ENCODE measurements at regions of chr1 and their contacts with region 1.

Region 1: DNA sequence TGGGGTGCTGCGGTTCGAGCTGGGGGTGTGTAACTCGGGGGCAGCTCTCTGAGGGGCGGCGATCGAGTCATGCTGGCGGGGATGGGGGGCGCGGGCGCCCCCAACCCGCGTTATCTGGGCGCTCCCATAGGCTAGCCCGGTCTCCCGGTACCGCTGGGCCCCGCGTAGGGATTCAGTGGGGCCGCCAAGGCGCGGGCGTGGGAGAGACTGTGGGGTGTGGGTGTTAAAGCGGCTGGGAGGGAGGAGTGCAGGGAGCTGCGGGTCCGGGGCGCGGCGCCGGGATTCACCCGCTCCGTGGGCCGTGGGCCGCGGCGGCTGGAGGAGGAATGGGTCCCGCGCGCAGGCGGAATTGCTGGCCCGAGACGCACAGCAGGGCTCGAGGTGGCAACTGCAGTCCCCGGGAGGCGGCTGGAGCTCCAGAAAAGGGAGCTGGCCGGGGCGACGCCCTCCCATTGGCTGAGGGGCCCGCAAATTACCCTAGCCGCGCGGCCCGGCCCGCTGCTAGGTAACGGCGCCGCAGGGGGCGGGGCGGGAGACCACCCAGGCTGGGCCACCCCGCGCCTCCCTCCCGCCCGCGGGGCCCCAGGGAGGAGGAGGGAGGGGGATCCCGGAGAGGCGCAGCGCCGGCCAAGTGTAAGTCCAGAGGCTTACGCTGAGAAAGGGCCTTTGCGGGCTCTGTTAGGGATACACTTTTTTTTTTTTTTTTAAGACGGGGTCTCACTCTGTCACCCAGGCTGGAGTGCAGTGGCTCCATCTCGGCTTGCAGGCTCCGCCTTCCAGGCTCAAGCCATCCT is at the start of gene PTCH2:
- DNase-seq: no peak
- H3K4me3 ChIP-seq: peak within 1 kb of the TSS; percentile 62
- H3K27me3 ChIP-seq: no peaks in the 10 kb centered on the region
- CTCF ChIP-seq: no peak
- polyA plus RNA-seq, gene PTCH2: 0.12 and 0.17 TPM in 2 replicates

Region 2: GRCh38 chr1:44826375-44827196 is 16.5 kb before region 1 on chr1:
- CTCF ChIA-PET with region 1: interaction called, 10 read pairs
- POLR2A ChIA-PET with region 1: no interaction called
- DNase-seq: no peak
- H3K4me3 ChIP-seq: no peak overlapping the region
- H3K27me3 ChIP-seq: no peaks in the 10 kb centered on the region
- CTCF ChIP-seq: no peak

Region 3: DNA sequence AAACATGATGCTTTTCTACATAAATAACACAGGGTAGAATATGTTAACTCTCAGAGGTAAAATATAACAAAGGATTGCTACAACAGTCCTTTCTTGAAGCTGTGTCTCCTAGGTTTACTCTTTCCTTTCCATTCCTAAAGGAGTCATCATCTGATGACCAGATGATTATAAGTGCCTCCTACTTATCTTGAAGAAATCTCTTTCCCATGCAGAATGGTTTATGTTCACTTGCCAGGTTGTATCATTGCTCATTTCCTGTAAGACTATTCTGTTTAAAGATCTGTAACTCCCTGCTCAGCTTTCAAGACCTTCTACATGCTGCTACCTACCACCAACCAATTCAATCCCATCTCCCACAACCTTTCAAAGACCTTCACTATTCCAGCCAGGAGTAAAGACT is 51.5 kb after region 1 on chr1:
- CTCF ChIA-PET with region 1: no interaction called
- POLR2A ChIA-PET with region 1: no interaction called
- DNase-seq: peak; percentile 76
- H3K4me3 ChIP-seq: no peak overlapping the region
- H3K27me3 ChIP-seq: no peaks in the 10 kb centered on the region
- CTCF ChIP-seq: no peak

Measured in BJ (cell line).